ENCODE measurements at regions of chr1 and their contacts with region 1.

Region 1: DNA sequence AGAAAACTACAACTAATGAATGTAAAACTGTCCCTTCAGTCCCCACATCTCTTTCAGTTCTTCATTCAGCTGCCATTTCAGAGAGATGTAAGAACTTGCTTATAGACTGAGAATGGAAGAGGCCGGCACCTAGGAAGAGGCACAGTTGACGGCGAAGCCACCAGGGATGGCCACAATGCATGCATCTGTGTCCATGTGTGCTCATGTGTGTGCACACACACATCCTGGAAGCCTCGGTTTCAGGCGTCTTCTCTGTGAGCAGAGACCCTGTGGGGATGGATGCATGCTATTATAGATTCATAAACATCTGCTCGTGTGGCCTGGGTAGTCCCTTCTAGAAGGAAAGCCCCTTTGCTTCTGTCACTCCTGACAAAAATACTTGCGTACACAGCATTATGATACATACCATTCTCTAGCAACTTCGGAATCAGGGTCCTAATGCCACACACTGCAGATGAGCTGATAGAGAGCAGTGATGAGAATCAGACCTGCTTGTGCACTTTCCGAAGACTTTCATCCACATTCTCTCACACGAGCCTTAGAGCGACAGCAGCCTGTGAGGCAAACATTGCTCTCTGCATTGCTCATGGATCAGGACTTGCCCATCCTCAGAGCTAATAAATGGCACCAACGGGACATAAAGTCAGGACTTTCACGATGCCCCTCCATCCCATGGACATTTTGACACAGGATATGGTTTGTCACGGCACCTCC is 12.4 kb upstream of the GPR61 start:
- DNase-seq: no peak
- H3K4me3 ChIP-seq: no peak overlapping the region
- H3K27ac ChIP-seq: no peak overlapping the region
- H3K4me1 ChIP-seq: no peaks in the 10 kb centered on the region
- H3K27me3 ChIP-seq: no peaks in the 10 kb centered on the region
- CTCF ChIP-seq: no peak
- POLR2A ChIP-seq: no peak

Region 2: DNA sequence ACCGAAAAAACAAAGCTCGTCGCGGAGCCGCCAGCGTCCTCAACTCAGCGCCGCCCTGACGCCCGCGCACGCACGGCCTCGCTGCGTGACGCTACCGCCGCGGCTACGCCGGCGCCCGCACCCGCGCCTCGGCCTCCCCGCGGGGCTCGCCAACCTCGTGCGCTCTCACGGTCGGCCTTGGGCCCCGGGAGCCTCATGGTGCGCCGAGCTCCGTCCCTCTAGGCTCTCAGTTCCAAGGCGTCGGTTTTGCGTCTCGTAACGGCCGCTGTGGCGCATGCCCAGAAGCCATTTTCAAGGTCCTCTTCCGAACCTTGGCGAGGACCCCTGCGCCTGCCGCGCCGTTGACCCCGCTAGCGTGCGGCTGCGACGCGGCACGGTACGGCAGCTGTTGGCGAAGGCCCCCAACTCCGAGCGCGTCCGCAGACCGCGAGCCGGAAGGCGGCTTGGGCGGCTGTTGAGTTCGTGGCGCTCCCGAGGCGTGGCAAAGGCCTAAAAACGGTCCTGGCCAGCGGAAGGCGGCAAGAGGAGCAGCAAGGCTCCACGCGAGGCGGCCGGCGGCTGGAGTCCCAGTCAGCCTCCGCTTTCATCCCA is 866.1 kb before region 1 on chr1 and contains the start of gene HENMT1:
- intact Hi-C with region 1: no loop called
- DNase-seq: peak; percentile 35 to 59
- H3K4me3 ChIP-seq: peak within 1 kb of the TSS; percentile 56 to 86 (median 76)
- H3K27ac ChIP-seq: peak within 1 kb of the TSS; percentile 93 to 96
- H3K4me1 ChIP-seq: no peaks in the 10 kb centered on the region
- H3K27me3 ChIP-seq: no peaks in the 10 kb centered on the region
- CTCF ChIP-seq: no peak
- POLR2A ChIP-seq: no peak
- total RNA-seq, gene HENMT1: 5.2 to 6.9 (median 6.6) TPM

Region 3: DNA sequence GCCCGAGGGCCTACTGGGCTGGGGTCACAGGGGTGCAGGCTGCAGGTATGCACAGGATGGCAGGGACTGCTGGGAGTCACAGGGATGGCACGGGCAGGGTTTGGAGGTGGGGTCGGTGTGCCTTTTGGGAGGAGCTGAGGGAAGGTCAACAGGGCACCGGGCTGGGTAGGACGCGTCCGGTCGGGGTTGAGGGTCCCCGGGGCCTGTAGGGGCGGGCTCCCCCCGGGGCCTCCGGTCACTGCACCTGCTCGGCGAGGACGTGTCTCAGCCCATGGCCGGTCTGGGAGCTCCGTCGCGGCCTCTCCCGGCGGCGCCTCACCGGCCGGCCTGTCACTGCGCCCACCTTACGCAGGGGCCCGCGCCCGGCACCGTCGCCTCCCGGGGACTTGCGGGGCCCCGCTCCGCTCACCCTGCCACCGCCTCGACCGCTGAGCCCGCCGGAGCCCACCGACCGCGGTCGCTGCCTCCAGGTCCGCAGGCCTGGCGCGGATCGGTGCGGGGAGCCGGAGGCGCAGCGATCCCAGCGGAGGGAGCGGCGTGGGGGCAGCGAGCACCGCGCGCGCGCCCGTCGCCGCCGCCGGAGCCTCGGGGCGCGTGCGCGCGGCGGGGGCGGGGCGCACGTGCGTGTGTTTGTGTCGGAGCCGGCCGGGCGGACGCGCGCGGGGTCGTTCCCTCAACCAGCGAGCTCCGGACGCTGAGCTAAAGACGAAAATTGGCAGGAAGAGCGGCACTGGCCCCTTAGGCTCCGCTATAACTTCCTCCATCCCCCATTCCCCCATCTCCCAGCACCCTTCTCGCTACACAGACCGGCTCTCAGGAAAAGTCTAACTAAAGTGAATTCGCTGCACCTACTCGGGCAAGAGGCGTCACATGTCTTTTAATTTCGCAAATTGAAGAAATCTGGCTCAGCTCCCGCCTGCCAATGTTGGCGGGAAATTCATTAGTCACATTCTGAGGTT is 17.8 kb before region 1 on chr1 and contains the start of gene AMIGO1:
- intact Hi-C with region 1: loop called (anchors 2 kb)
- DNase-seq: no peak
- H3K4me3 ChIP-seq: peak within 1 kb of the TSS; percentile 57 to 85 (median 73)
- H3K27ac ChIP-seq: peak within 1 kb of the TSS; percentile 29 to 53
- H3K4me1 ChIP-seq: no peaks in the 10 kb centered on the region
- H3K27me3 ChIP-seq: no peaks in the 10 kb centered on the region
- CTCF ChIP-seq: no peak
- POLR2A ChIP-seq: no peak
- total RNA-seq, gene AMIGO1: 3.0 to 9.5 (median 6.4) TPM